ENCODE measurements at regions of chr14 and their contacts with region 1.

Region 1: DNA sequence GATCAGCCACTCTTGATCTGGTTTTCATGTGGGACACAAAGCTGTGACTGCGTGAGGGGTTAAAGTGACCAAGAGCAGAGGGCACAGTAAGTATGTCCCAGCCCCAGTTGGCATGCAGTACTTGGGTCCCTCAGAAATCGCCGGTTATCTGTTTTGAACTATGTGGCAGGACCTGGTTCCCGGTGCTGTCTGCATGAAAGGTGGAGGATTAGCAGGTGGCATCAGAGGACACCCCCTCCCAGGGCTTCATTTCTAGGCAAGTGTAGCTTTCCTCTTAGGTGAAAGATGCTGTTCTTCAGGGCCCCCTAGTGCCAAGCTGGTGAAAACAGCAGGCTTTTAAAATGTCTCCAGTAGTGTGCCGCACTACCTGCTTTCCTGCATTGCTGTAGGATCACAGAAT is 57.1 kb downstream of the ATG14 start:
- DNase-seq: no peak
- ATAC-seq: peak; percentile 55
- H3K4me3 ChIP-seq: no peak overlapping the region
- H3K27ac ChIP-seq: no peak overlapping the region
- H3K4me1 ChIP-seq: no peaks in the 10 kb centered on the region
- H3K27me3 ChIP-seq: no peaks in the 10 kb centered on the region

Region 2: GRCh38 chr14:55212634-55213033 is 141.9 kb before region 1 on chr14:
- intact Hi-C with region 1: loop called in 1 of 2 experiments (anchors 5 kb)
- DNase-seq: no peak
- ATAC-seq: no peak
- H3K4me3 ChIP-seq: no peak overlapping the region
- H3K27ac ChIP-seq: no peak overlapping the region
- H3K4me1 ChIP-seq: no peaks in the 10 kb centered on the region
- H3K27me3 ChIP-seq: peaks cover 0 to 2% of the 10 kb centered on the region in 2 donors

Region 3: GRCh38 chr14:55245657-55246268 is 108.7 kb before region 1 on chr14:
- intact Hi-C with region 1: loop called (anchors 10 kb)
- DNase-seq: no peak
- ATAC-seq: no peak
- H3K4me3 ChIP-seq: no peak overlapping the region
- H3K27ac ChIP-seq: no peak overlapping the region
- H3K4me1 ChIP-seq: no peaks in the 10 kb centered on the region
- H3K27me3 ChIP-seq: no peaks in the 10 kb centered on the region

Region 4: DNA sequence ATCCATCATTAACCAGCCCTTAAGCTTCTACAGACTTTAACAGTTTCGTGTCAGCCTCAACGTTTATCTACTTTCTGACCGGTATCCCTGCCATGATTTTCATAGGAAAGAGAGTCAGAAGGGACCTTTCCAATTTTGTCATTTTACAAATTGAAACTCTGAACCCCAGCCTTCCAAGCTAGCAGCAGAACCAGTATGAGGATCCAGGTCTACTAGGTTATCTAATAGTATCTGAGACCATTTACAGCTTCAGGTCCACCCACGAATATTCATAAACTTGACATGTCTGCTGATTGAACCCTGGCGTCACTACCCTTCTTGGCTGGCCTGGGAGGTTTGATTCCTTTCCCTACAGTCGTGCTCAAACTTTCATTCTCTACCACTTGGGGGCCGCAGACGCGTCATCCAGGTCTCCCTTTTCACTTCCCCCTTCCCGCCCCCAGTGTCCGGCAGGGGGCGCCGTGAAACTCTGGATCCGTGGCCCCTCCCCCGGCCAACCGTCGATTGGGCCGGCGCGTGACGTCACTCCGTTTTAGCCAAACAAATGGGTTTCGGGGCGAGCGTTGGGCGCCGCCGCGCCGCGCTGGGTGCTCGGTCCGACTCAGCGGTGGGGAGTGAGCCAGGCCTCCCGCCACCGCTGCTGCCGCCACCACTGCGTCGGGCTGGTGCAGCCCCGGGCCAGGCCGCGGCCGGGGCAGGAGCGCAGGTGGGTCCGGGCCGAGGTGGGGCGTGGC is 83.5 kb before region 1 on chr14 and contains the start of gene FBXO34:
- intact Hi-C with region 1: loop called in 1 of 2 experiments (anchors 5 kb)
- DNase-seq: peak; percentile 99 to 100
- ATAC-seq: peak; percentile 98
- H3K4me3 ChIP-seq: peak within 1 kb of the TSS; percentile 60 to 79
- H3K27ac ChIP-seq: peak within 1 kb of the TSS; percentile 7 to 64
- H3K4me1 ChIP-seq: peaks cover 3 to 5% of the 10 kb centered on the region in 2 donors
- H3K27me3 ChIP-seq: no peaks in the 10 kb centered on the region
- total RNA-seq, gene FBXO34: 22.2 to 23.1 TPM

Measured in aorta (tissue), 5 donors.